Kidney (tissue), 22 donors: ENCODE measurements at regions of chr16 and their contacts with region 1.

Region 1: DNA sequence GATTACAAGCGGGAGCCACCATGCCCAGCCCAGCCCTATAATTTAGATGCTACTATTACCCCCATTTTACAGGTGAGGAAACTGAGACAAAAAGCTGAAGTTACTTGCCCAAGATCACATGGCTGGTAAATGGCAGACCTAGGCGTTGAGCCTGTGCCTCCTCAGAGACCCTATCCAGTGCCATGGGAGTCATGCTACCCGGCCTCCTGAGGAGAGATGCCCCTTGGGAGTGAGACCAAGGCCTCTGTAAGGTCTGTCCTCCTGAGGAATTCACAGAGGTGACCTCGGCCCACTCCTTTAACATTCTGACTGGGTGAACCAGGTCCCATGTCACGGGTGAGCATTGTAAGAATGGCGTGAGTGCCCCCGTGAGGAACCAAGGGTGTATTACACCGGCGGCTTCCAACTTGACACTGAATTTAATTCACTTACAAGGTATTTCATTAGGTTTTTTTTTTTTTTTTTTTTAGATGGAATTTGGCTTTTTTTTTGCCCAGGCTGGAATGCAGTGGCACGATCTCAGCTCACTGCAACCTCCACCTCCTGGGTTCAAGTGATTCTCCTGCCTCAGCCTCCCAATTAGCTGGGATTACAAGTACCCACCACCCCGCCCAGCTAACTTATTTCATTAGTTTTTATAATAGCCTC is 95.7 kb downstream of the ABCC6 start:
- DNase-seq: peak; percentile 80 to 84 (median 82)
- H3K4me3 ChIP-seq: no peak overlapping the region
- H3K27ac ChIP-seq: no peak overlapping the region
- H3K4me1 ChIP-seq: peaks cover 0 to 2% (median 0%) of the 10 kb centered on the region in 3 donors
- H3K27me3 ChIP-seq: no peaks in the 10 kb centered on the region
- CTCF ChIP-seq: peak; percentile 89

Region 2: DNA sequence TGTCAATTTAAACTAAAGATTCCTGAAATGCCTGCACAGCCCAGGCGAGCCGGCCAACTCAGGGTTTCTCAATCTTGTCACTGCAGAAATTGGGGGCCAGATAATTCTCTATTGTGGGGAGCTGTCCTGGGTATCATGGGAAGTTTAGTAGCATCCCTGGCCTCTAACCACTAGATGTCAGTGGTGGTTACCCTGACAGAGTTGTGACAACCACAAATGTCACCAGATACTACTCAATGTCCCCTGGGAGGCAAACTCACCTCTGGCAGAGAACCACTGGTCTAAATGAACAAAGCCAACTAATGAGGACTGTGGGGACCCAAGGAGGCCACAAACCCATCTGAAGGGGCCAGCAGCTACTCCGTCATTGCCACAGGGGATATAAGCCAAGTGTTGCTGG is 361.7 kb before region 1 on chr16:
- intact Hi-C with region 1: loop called (anchors 10 kb)
- DNase-seq: peak; percentile 32 to 78 (median 53)
- H3K4me3 ChIP-seq: no peak overlapping the region
- H3K27ac ChIP-seq: no peak overlapping the region
- H3K4me1 ChIP-seq: no peaks in the 10 kb centered on the region
- H3K27me3 ChIP-seq: no peaks in the 10 kb centered on the region
- CTCF ChIP-seq: peak; percentile 53

Region 3: GRCh38 chr16:15874745-15875314 is 252.8 kb before region 1 on chr16:
- intact Hi-C with region 1: loop called (anchors 5 kb)
- DNase-seq: peak in 3 of 5 donors; percentile 48 to 73 (median 65)
- H3K4me3 ChIP-seq: no peak overlapping the region
- H3K27ac ChIP-seq: no peak overlapping the region
- H3K4me1 ChIP-seq: no peaks in the 10 kb centered on the region
- H3K27me3 ChIP-seq: no peaks in the 10 kb centered on the region
- CTCF ChIP-seq: peak; percentile 63